Dendritic cell treated with granulocyte-macrophage colony-stimulating factor and Interleukin-4, amounts not matched to agents 40 ng/mL and 50 ng/mL, for 4 days (primary cell): ENCODE measurements at regions of chr7 and their contacts with region 1.

Region 1: DNA sequence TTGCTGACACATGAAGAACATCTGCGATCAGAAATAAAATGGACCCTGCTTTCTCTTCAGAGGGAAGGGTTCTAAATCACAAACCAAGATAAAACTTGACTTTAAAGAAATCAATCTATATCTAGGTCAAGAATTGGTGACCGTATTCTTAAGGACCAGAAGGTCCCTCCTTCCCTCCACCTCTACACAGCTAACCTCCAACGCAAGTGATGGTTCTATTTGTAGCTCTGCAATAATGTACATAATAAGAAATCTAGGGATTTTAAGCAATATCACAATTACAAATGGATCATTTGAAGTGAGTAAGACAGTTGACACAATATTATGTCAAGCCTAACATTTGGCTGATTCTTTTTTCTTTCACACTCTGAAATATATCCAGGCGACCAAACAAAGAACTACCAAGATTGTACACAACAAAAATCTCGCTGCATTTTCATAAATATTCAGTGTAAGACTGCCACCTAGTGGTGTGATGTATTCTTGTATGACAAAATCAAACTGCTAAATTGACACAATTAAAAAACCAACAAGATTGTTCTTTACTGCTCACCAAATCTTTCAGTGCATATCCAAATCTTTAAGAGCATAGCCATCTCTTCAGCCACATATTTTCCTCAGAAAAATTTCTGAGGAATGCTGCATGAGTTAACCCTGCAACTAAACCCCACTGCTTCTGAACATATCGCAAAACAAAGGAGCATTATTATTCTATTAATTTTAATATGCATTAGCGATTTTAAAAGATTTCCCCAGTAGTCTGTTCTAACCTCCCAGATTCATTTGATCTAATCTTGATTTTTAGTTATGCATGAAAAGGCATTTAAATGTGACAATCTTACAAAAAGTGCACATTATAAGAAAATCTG is 44.5 kb downstream of the ICA1 start:
- H3K4me3 Mint-ChIP-seq: no peak overlapping the region
- H3K27ac Mint-ChIP-seq: no peak overlapping the region
- H3K4me1 Mint-ChIP-seq: no peaks in the 10 kb centered on the region
- H3K27me3 Mint-ChIP-seq: no peaks in the 10 kb centered on the region

Region 2: DNA sequence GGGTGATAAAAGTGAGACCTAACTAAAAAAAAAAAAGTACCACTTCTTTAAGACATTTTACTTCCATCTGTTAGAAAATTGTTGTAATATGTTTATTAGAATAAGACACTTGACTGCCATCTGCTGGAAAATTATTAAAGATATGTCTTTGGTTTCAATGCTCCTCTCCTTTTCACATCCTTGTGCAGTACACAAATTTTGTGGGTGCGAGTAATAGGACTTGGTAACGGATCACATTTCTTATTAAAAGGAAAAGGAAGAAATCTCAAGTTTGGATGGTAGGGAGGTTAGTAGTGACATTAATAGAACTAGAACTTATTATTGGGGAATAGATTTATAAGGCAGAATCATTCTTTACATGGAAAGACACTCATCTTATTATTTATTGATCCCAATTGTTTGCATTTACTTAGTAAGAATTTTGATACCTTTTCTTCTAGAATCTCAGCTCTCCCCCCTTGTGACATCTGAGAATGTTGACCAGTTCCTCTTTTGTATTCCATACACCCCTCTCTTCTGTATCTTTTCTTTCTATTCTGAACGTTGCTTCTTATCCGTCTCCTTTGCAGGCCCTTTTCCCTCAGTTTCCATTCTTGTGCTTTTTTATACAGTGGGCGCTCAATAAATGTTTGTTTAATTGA is 456.0 kb before region 1 on chr7:
- intact Hi-C with region 1: loop called (anchors 2 kb)
- H3K4me3 Mint-ChIP-seq: peak overlapping the region; percentile 76
- H3K27ac Mint-ChIP-seq: peak overlapping the region; percentile 49
- H3K4me1 Mint-ChIP-seq: peaks cover 13% of the 10 kb centered on the region
- H3K27me3 Mint-ChIP-seq: no peaks in the 10 kb centered on the region

Region 3: DNA sequence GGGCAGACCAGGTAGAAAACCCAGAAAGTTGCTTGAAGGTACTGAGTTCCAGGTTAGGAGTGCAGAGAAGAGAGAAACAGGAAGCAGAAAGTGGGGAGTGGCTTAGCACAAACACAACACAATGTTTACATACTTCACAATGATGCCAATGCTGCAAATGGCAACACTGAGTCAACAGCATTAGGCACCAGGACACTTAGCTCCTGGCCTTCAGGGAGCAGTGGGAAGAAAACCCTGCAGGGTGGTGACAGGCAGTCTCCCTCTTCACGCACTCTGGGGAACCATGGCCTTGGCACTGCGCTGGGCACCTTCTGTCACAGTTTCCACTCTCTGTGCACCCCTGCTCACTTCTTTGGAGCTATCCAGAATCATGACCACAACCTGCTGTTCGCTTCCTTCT is 37.2 kb after region 1 on chr7:
- intact Hi-C with region 1: no loop called
- H3K4me3 Mint-ChIP-seq: no peak overlapping the region
- H3K27ac Mint-ChIP-seq: no peak overlapping the region
- H3K4me1 Mint-ChIP-seq: peaks cover 10% of the 10 kb centered on the region
- H3K27me3 Mint-ChIP-seq: no peaks in the 10 kb centered on the region

Region 4: GRCh38 chr7:8295638-8296361 is 78.4 kb after region 1 on chr7:
- intact Hi-C with region 1: loop called (anchors 5 kb)
- H3K4me3 Mint-ChIP-seq: no peak overlapping the region
- H3K27ac Mint-ChIP-seq: no peak overlapping the region
- H3K4me1 Mint-ChIP-seq: no peaks in the 10 kb centered on the region
- H3K27me3 Mint-ChIP-seq: peaks cover 3% of the 10 kb centered on the region